ENCODE measurements at regions of chr12 and their contacts with region 1.

Region 1: DNA sequence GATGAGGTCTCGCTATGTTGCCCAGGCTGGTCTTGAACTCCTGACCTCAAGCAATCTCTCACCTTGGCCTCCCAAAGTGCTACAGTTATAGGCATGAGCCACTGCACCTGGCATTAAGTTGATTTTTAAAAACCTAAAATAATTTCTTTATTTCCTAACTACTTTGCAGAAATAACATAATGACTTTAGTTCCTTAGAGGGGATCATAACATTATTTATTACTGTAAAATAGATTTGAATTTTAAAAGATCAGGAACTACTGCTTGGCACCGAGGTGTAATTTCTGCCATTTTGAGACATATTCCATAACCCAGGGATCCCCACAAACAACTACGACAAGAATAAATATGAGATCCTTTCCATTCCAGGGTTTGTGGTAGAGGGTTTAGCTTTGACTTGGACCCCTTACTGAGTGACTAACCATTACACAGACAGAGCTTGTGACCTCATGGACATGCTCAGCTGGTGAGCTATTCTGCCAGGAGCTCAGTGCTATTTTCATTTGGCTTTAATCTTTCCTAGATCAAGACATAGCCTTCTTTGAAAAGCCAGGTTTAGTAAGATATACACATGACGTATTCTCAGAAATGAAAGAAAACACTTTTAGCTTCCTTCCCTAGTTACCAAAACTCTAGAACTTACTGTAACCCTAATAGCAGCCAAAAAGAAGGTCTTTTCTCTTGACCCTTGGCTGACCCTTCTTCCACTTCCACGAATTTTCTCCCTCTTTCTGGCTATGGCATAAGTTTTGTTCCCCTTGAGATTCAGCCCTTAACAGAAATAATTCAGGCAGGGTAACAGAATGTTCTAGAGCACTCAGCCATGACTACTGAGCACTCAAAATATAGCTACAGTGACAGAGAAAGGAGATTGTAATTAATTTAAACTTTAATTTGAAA is 75.1 kb upstream of the NUDT4 start:
- DNase-seq: peak in 1 of 2 donors; percentile 55
- ATAC-seq: peak; percentile 91
- H3K4me3 ChIP-seq: no peak overlapping the region
- H3K27ac ChIP-seq: peak overlapping the region; percentile 30 to 57
- H3K4me1 ChIP-seq: peaks cover 0 to 2% of the 10 kb centered on the region in 2 donors
- H3K27me3 ChIP-seq: no peaks in the 10 kb centered on the region

Region 2: DNA sequence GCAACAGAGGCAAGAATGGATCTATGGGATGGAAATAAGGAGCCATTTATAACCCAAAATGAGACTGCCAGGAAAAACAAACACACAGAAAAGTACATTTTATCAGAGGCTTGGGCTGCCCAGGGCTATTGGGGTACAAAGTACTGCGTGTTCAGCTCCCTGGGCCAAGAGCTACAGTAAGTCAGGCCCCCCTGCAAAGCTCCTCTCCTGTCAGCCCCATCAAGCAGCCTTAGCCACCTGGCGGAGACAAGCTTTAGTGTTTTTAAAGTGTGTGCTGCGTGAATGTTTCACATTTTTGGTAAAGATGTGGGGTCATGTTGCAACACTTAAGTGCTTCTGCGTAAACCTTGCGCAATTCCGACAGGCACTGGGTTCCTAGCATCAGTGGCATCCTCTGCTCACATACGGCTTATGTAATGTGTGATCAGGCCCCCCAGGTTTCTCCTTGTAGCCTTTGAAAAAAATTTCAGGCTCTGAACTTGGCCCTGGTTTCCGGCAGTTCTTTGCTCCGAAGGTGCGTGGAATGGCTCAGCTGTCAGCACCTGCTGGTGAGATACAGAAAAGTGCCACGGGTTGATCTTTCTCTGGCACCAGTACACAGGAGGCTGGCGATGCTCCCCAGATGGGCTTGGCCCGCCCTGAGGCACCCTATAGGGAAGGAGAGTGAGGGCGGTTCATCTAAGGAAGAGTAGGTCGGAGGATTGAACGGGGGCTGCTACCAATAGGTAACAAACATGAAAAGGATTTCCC is 174.8 kb before region 1 on chr12:
- intact Hi-C with region 1: loop called in 1 of 2 experiments (anchors 5 kb)
- DNase-seq: peak; percentile 63 to 78
- ATAC-seq: peak; percentile 84
- H3K4me3 ChIP-seq: no peak overlapping the region
- H3K27ac ChIP-seq: peak overlapping the region in 1 of 2 donors; percentile 69
- H3K4me1 ChIP-seq: peaks cover 4 to 18% of the 10 kb centered on the region in 2 donors
- H3K27me3 ChIP-seq: no peaks in the 10 kb centered on the region

Region 3: DNA sequence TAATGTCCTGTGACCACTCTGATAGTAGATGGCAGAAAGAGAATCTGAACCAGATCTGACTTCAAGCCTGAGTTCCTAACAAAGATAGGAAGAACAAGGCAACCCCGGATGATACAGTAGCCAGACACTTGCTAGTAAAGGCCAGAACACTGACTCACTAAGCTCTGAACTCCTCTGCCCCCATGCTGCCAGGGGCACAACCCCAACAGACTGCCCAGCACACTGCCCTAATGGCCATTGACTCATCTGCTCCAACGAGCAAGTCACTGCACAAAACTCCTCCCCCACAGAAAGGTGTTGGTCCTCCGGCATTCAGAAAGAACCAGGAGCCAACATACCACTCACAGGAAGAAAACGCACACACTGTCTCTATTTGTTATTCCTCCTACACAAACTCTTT is 104.5 kb before region 1 on chr12:
- intact Hi-C with region 1: loop called in 1 of 2 experiments (anchors 10 kb)
- DNase-seq: no peak
- ATAC-seq: no peak
- H3K4me3 ChIP-seq: no peak overlapping the region
- H3K27ac ChIP-seq: no peak overlapping the region
- H3K4me1 ChIP-seq: peaks cover 1 to 3% of the 10 kb centered on the region in 2 donors
- H3K27me3 ChIP-seq: no peaks in the 10 kb centered on the region

Region 4: GRCh38 chr12:93378373-93379325 is 76.1 kb after region 1 on chr12:
- intact Hi-C with region 1: loop called (anchors 5 kb)
- DNase-seq: peak in 1 of 2 donors; percentile 63
- ATAC-seq: peak; percentile 31
- H3K4me3 ChIP-seq: peak overlapping the region; percentile 100
- H3K27ac ChIP-seq: peak overlapping the region; percentile 91 to 100
- H3K4me1 ChIP-seq: peaks cover 0 to 4% of the 10 kb centered on the region in 2 donors
- H3K27me3 ChIP-seq: no peaks in the 10 kb centered on the region

Region 5: GRCh38 chr12:93467351-93468007 is 164.9 kb after region 1 on chr12 and contains the start of gene MRPL42:
- intact Hi-C with region 1: no loop called
- DNase-seq: peak; percentile 93 to 97
- ATAC-seq: peak; percentile 97
- H3K4me3 ChIP-seq: peak within 1 kb of the TSS; percentile 63 to 95
- H3K27ac ChIP-seq: peak within 1 kb of the TSS in 1 of 2 donors; percentile 91
- H3K4me1 ChIP-seq: no peaks in the 10 kb centered on the region
- H3K27me3 ChIP-seq: no peaks in the 10 kb centered on the region
- total RNA-seq, gene MRPL42: 40.7 to 48.5 TPM

Measured in aorta (tissue), 5 donors.